OCI-LY7 (cell line): ENCODE measurements at regions of chr7 and their contacts with region 1.

Region 1: GRCh38 chr7:8418629-8419245 is 14.7 kb upstream of the NXPH1 start:
- DNase-seq: peak; percentile 65
- H3K4me3 ChIP-seq: no peak overlapping the region
- H3K27ac ChIP-seq: no peak overlapping the region
- H3K4me1 ChIP-seq: no peaks in the 10 kb centered on the region
- CTCF ChIP-seq: peak; percentile 97

Region 2: DNA sequence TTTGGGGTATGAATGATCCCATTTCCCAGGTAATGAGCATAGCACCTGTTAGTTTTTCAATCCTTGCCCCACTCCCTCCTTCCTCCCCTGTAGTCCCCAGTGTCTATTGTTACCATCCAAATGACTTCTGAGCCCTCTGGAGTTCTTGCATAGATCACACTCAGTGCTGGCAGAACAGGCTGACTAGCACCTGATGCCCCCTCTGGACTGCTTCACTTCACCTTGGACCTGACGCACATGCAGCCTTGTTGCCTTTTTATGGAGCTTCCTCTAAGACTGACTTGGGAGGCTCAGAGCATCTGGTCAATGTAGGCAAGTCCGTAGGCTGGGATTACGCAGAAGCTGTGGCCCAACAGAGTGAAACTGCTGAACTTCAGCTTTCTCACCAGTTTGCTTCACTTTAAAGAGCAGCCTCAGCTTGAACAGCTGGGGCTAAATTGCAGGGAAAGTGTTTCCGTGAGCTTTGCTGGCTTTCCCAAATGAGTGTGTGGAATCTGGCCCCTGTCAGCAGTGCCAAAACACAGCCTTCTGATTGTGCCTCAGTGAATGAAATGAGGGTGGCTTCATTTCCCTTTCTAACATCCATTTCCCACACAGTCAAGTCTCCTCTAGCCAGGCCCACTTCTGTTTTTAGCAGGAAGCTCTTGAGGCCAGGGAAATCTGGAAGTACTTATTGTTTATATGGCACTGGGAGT is 63.2 kb after region 1 on chr7:
- CTCF ChIA-PET with region 1: no interaction called
- POLR2A ChIA-PET with region 1: no interaction called
- intact Hi-C with region 1: no loop called
- DNase-seq: no peak
- H3K4me3 ChIP-seq: no peak overlapping the region
- H3K27ac ChIP-seq: no peak overlapping the region
- H3K4me1 ChIP-seq: no peaks in the 10 kb centered on the region
- CTCF ChIP-seq: no peak

Region 3: DNA sequence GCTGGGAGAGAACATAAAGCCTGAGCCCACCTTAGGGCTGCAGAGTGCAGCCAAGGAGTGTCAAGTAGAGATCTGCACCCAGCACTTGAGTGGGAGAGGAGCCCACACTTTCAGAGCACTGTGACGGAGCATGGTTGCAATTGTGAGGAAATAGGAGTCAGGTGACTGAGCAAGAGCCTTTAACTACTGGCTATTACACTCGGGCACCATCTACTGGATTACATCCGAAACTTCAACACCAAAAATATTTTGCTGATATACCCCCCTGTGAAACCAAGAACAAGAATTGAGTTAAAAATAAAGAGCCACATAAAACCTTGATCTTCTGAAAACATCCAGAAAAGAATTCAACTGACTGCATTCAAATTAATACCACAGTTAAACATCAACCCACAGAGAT is 672.5 kb after region 1 on chr7:
- CTCF ChIA-PET with region 1: no interaction called
- POLR2A ChIA-PET with region 1: no interaction called
- intact Hi-C with region 1: loop called (anchors 10 kb)
- DNase-seq: peak; percentile 14
- H3K4me3 ChIP-seq: no peak overlapping the region
- H3K27ac ChIP-seq: no peak overlapping the region
- H3K4me1 ChIP-seq: no peaks in the 10 kb centered on the region
- CTCF ChIP-seq: peak; percentile 63

Region 4: GRCh38 chr7:10412422-10413019 is 1993.8 kb after region 1 on chr7:
- CTCF ChIA-PET with region 1: no interaction called
- POLR2A ChIA-PET with region 1: no interaction called
- intact Hi-C with region 1: loop called (anchors 10 kb)
- DNase-seq: peak; percentile 47
- H3K4me3 ChIP-seq: no peak overlapping the region
- H3K27ac ChIP-seq: no peak overlapping the region
- H3K4me1 ChIP-seq: no peaks in the 10 kb centered on the region
- CTCF ChIP-seq: peak; percentile 84